Calu3 (cell line): ENCODE measurements at regions of chr17 and their contacts with region 1.

Region 1: DNA sequence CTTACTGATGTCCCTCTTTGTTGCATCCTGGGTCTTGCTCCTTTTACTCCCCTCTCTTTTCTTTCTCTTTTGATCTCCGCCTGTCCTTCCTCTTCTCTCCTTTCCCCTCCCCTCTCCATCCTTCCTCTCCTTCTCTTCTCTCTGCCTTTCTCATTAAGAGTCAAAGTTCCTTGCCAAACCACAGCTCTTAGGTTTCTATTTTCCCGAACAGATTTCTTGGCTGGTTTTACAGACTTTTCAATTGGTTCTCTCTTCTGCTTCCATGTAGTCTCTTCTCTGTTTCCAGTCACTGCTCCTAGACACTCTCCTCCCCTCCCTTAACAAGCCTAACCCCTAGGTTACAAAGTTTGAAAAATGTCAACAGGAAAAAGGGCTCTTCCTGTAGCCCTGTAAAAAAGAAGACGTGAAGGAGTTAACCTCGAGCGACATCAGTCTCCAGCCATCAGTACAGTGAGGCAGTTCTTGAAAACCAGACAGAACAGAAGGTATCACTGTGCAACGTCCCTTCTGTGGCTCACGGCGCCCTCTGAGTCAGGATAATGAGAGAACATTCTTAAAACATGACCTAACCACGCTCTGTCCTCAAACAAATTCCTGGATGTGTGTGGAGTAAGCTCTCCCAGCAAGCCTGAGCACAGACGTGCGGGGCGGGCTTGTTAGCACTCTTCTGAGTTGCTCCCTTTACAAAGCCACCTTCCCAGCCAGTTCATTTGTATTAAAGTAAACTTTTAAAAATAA is 11.5 kb upstream of the MARCHF10 start:
- DNase-seq: peak; percentile 49
- H3K4me3 Mint-ChIP-seq: no peak overlapping the region
- H3K27ac Mint-ChIP-seq: peak overlapping the region; percentile 18
- H3K4me1 Mint-ChIP-seq: peaks cover 15% of the 10 kb centered on the region
- H3K27me3 Mint-ChIP-seq: no peaks in the 10 kb centered on the region
- CTCF ChIP-seq: no peak

Region 2: GRCh38 chr17:62703775-62704378 is 115.8 kb before region 1 on chr17:
- CTCF ChIA-PET with region 1: interaction called, 6 read pairs
- intact Hi-C with region 1: loop called (anchors 5 kb)
- DNase-seq: peak; percentile 82
- H3K4me3 Mint-ChIP-seq: peak overlapping the region; percentile 62
- H3K27ac Mint-ChIP-seq: no peak overlapping the region
- H3K4me1 Mint-ChIP-seq: peaks cover 15% of the 10 kb centered on the region
- H3K27me3 Mint-ChIP-seq: no peaks in the 10 kb centered on the region
- CTCF ChIP-seq: peak; percentile 76